GM12878 (cell line): ENCODE measurements at regions of chr22 and their contacts with region 1.

Region 1: DNA sequence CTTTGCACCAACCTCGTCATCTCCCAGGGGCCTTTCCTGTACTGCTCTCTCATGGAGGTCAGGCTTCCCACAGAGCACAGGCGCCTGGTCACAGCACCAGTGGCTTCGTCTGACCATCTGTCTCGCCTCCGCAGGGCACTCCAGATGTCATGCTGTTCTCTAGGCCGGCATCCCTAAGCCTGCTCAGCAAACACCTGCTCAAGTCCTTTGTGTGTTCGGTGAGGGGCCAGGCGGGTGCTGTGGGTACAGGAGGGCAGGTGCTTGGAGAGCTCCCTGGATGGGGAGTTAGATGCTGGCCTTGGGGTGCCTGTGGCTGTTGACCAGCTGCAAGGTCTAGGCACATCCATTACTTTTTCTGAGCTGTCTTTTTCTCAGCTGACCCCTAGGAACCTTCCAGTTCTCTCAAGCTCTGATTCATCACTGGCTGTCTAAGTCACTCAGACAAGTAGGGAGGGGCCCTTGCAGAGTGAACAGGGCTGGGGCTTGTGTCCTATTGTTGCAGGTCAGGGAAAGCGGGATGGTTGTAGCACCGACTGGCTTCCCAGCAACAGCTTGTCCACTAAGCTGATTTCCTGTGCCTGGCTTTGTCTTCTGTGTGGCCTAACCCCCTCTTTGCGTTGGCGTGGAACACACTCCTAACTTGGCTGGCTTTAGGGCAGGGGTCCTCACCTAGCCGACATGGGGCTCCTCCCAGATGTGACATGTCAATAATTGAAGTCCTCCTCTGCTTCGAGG is 9.2 kb downstream of the CLDN5 start:
- DNase-seq: no peak
- ATAC-seq: no peak
- H3K4me3 ChIP-seq: no peak overlapping the region
- H3K27ac ChIP-seq: no peak overlapping the region
- H3K4me1 ChIP-seq: no peaks in the 10 kb centered on the region
- H3K27me3 ChIP-seq: no peaks in the 10 kb centered on the region
- CTCF ChIP-seq: no peak
- EP300 ChIP-seq: no peak
- POLR2A ChIP-seq: no peak
- RAD21 ChIP-seq: no peak

Region 2: DNA sequence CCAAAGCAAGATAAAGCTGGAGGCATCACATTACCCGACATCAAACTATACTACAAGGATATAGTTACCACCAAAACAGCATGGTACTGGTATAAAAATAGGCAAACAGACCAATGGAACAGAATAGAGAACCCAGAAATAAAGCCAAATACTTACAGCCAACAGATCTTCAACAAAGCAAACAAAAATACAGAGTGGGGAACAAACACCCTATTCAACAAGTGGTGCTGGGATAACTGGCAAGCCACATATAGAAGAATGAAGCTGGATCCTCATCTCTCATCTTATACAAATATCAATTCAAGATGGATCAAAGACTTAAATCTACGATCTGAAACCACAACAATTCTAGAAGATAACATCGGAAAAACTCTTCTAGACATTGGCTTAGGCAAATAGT is 173.5 kb before region 1 on chr22:
- CTCF ChIA-PET with region 1: no interaction called
- POLR2A ChIA-PET with region 1: no interaction called
- RAD21 ChIA-PET with region 1: no interaction called
- SMC1A ChIA-PET with region 1: no interaction called
- in situ Hi-C with region 1: no loop called
- intact Hi-C with region 1: no loop called
- DNase-seq: no peak
- ATAC-seq: no peak
- H3K4me3 ChIP-seq: no peak overlapping the region
- H3K27ac ChIP-seq: no peak overlapping the region
- H3K4me1 ChIP-seq: no peaks in the 10 kb centered on the region
- H3K27me3 ChIP-seq: no peaks in the 10 kb centered on the region
- CTCF ChIP-seq: no peak
- EP300 ChIP-seq: no peak
- POLR2A ChIP-seq: no peak
- RAD21 ChIP-seq: no peak

Region 3: GRCh38 chr22:19568337-19569275 is 53.6 kb after region 1 on chr22:
- CTCF ChIA-PET with region 1: no interaction called
- POLR2A ChIA-PET with region 1: no interaction called
- RAD21 ChIA-PET with region 1: no interaction called
- SMC1A ChIA-PET with region 1: no interaction called
- in situ Hi-C with region 1: loop called (anchors 5 kb)
- intact Hi-C with region 1: no loop called
- DNase-seq: no peak
- ATAC-seq: peak; percentile 33; the same call in 1 of the 3 replicates
- H3K4me3 ChIP-seq: no peak overlapping the region
- H3K27ac ChIP-seq: no peak overlapping the region
- H3K4me1 ChIP-seq: no peaks in the 10 kb centered on the region
- H3K27me3 ChIP-seq: no peaks in the 10 kb centered on the region
- CTCF ChIP-seq: no peak
- EP300 ChIP-seq: no peak
- POLR2A ChIP-seq: no peak
- RAD21 ChIP-seq: no peak

Region 4: DNA sequence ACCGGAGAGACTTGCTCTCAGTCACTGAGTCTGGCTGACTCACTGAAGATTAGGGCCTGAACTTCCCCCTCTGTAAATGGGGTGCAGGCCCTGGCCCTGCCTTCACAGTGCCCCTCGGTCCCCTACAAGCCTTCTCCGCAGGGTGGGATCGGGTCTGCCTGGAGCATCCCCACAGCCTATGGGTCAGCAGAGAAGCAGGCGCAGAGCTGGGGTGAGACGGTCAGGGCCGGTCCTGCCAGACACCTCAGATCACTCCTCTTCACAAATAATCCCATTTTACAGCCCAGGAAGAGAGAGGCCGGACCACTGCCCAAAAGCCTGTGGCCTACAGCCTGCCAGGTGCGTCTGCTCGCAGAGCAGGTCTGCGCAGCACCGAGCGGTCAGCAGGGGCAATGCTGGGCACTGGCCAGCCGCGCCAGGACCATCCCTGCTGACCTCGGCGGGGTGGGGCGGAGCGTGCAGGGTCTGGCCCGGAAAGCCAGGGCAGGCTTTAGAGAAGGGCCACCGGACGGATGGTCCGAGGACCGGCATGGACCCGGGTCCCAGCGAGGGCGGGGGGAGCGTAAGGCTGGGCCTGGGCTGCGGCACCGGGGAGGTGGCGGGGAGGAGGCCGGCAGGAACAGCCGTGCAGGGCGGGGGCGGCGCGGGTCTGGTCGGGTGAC is 198.8 kb after region 1 on chr22:
- CTCF ChIA-PET with region 1: no interaction called
- POLR2A ChIA-PET with region 1: no interaction called
- RAD21 ChIA-PET with region 1: no interaction called
- SMC1A ChIA-PET with region 1: no interaction called
- in situ Hi-C with region 1: no loop called
- intact Hi-C with region 1: no loop called
- DNase-seq: no peak
- ATAC-seq: no peak
- H3K4me3 ChIP-seq: no peak overlapping the region
- H3K27ac ChIP-seq: no peak overlapping the region
- H3K4me1 ChIP-seq: peaks cover 8% of the 10 kb centered on the region
- H3K27me3 ChIP-seq: peaks cover 2 to 4% of the 10 kb centered on the region in 2 experiments; a peak in 3 of 4 replicates
- CTCF ChIP-seq: no peak
- EP300 ChIP-seq: no peak
- POLR2A ChIP-seq: no peak
- RAD21 ChIP-seq: no peak